ENCODE measurements at regions of chr20 and their contacts with region 1.

Region 1: DNA sequence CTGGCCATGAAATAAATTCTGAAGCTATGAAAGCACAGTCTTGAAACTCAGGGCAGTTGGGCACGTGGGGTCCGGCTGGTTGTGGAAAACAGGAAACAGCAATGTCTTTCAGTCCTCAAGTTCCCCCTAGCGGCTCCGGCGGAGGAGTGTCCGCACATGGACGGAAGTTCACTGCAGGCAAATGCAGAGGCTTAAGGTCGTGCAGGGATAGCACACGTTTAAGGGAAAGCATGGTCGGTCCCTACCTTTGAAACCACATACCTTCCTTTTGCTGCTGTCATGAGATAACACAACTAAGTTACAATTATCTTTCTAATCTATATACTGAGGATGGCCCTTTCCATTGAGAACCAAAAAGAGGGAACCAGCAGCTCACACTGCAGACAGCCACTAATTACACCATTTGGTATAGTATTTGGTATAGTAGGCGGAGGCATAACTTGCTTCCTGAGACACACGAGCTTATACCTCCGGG is 52.6 kb upstream of the NFATC2 start:
- DNase-seq: peak; percentile 93
- ATAC-seq: peak; percentile 97

Region 2: GRCh38 chr20:51372176-51372803 is 222.8 kb before region 1 on chr20:
- intact Hi-C with region 1: loop called (anchors 1 kb)
- DNase-seq: no peak
- ATAC-seq: peak; percentile 90

Region 3: GRCh38 chr20:51385646-51386530 is 209.2 kb before region 1 on chr20:
- intact Hi-C with region 1: loop called (anchors 2 kb)
- DNase-seq: no peak
- ATAC-seq: peak; percentile 39